ENCODE measurements at regions of chr12 and their contacts with region 1.

Region 1: DNA sequence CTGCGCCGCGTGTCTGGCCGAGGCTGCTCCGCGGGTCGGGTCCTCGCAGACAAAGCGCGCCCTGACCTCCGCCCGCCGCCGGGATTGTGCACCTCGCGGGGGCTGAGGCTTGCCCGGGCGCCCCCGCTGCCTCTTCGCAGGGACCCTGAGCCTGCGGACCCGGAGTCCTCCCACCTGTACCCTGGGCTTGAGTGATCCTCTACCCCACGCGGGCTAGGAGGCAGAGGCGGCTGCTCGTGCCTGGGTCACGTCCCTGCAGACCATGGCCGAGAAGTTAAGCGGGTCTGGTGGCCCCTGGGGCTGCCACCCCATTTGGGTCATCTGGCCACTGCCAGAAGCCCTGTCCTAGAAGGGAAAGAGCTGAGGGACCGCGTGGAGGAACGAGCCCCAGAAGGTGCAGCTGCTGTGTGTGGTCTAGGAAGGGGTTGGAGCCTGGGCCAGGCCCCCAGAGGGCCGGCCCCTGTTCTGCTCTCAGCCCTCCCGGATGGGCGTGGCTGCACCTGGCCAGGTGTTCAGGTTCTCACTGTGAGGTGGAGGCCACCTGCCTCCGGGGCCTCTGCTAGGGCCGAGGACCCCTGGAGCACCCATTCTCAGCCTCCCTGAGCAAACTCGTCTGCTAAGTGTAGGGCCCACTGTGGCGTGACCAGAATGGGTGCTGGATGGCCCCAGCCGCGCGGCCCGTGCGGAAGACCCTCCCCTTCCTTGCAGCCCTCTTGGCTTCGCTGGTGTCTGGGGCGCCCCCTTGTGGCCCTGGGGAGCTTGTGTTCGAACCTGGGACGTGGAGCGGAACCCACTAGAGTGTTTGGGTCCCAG is 49.6 kb downstream of the LRCOL1 start:
- DNase-seq: no peak
- ATAC-seq: peak in 3 of 4 donors; percentile 3 to 28 (median 13)
- H3K4me3 ChIP-seq: peak overlapping the region; percentile 33 to 78 (median 60)
- H3K27ac ChIP-seq: no peak overlapping the region
- H3K4me1 ChIP-seq: peaks cover 0 to 29% (median 13%) of the 10 kb centered on the region in 12 donors
- H3K27me3 ChIP-seq: peaks cover 0 to 18% (median 0%) of the 10 kb centered on the region in 9 donors
- CTCF ChIP-seq: peak; percentile 29 to 60 (median 52)
- POLR2A ChIP-seq: no peak

Region 2: GRCh38 chr12:132495629-132496357 is 65.0 kb before region 1 on chr12:
- intact Hi-C with region 1: loop called in 1 of 10 experiments (anchors 2 kb)
- DNase-seq: no peak
- ATAC-seq: peak in 2 of 4 donors; percentile 4 to 23
- H3K4me3 ChIP-seq: no peak overlapping the region
- H3K27ac ChIP-seq: peak overlapping the region in 1 of 12 donors; percentile 59
- H3K4me1 ChIP-seq: peaks cover 21 to 100% (median 90%) of the 10 kb centered on the region in 12 donors
- H3K27me3 ChIP-seq: no peaks in the 10 kb centered on the region
- CTCF ChIP-seq: no peak
- POLR2A ChIP-seq: no peak